SK-N-SH (cell line): ENCODE measurements at regions of chr11 and their contacts with region 1.

Region 1: DNA sequence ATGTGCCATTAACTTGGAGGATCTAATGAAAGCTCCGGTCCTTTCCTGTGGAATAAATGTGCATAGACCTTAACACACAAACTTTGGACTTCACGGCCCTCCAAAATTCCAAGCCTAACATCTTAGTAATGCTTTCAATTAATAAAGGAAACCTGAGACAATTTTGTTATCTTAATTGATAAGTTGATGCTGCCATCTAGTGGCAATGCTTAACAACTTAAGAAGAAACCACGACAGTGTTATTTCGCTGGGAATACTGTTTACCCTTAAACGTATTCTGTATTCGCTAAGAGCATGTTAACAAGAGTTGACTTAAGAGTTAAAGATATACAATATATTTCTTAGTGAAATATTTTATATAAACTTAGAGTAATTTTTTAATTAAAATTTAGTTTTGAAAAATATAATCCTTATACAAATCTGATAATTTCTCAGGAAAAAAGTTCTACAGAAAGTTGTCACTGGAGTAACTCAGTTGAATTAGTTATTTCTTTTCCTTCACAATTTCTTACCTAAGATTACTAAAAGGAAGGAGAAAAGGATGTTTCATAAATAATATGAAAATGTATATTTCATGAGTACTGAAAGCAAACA is 35.0 kb upstream of the OR9G4 start:
- DNase-seq: peak; percentile 12
- H3K4me3 ChIP-seq: peak overlapping the region; percentile 26 to 52
- H3K27ac ChIP-seq: no peak overlapping the region
- H3K4me1 ChIP-seq: no peaks in the 10 kb centered on the region
- H3K27me3 ChIP-seq: no peaks in the 10 kb centered on the region
- CTCF ChIP-seq: peak; percentile 74
- EP300 ChIP-seq: no peak
- RAD21 ChIP-seq: peak; percentile 78

Region 2: GRCh38 chr11:56624661-56625110 is 158.9 kb before region 1 on chr11:
- CTCF ChIA-PET with region 1: interaction called, 12 read pairs
- POLR2A ChIA-PET with region 1: no interaction called
- DNase-seq: peak; percentile 37
- H3K4me3 ChIP-seq: no peak overlapping the region
- H3K27ac ChIP-seq: no peak overlapping the region
- H3K4me1 ChIP-seq: no peaks in the 10 kb centered on the region
- H3K27me3 ChIP-seq: no peaks in the 10 kb centered on the region
- CTCF ChIP-seq: peak; percentile 76
- EP300 ChIP-seq: no peak
- RAD21 ChIP-seq: peak; percentile 62